Posterior cingulate gyrus (tissue), 11 donors: ENCODE measurements at regions of chr15 and their contacts with region 1.

Region 1: GRCh38 chr15:43510200-43511011 is 7.0 kb upstream of the MAP1A start:
- DNase-seq: peak; percentile 96 to 100 (median 99)

Region 2: DNA sequence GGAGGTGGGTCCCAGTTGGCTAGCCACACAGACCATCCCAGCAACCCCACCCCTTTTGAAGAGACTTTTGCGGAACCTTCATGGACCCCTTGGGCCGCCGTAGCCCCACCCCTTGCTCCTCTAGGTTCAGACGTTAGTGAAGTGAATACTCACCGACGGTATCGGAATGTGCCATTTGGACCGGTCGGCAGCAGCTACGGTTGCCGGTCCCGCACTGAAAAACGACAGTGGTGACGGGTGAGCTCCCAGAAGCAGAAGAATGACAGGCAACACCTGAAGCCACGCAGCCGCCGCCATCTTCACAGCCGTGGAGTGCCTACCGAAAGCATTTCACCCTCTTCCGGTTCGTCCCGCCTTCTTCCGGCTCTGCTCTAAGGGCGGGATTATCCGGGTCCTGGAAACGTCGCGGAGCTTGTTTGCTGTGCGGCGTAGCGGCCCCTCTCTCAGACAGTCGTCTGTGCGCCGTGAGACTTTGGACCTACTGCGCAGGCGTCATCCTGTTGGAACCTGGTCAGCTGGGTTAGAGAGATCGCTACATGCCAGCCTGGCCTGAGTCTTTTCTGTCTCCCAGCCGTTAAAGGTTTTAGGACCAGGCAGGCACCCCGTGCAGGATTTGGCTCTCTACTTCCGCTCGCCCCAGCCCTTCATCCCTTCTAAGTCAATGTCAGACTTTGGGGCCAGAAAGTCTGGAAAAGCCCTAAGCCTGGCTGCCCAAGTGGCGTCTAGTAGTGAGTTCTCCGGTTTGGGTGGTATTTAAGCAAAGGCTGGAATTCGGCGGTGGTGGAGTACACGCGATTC is 1237.1 kb before region 1 on chr15 and contains the starts of genes GANC and TMEM87A:
- intact Hi-C with region 1: loop called (anchors 10 kb)
- DNase-seq: peak; percentile 97 to 99 (median 98)

Region 3: GRCh38 chr15:43440721-43441281 is 69.6 kb before region 1 on chr15:
- intact Hi-C with region 1: loop called (anchors 2 kb)
- DNase-seq: peak in 5 of 10 donors; percentile 16 to 52 (median 24)

Region 4: GRCh38 chr15:43492673-43493601 is 17.5 kb before region 1 on chr15 and contains the start of gene TP53BP1:
- intact Hi-C with region 1: loop called (anchors 2 kb)
- DNase-seq: peak; percentile 93 to 99 (median 98)